ENCODE measurements at regions of chr11 and their contacts with region 1.

Region 1: GRCh38 chr11:58788355-58789023 is 56.0 kb downstream of the GLYATL2 start:
- DNase-seq: peak in 1 of 2 experiments; percentile 46
- H3K4me3 ChIP-seq: no peak overlapping the region
- H3K27ac ChIP-seq: no peak overlapping the region
- H3K4me1 ChIP-seq: no peaks in the 10 kb centered on the region
- H3K27me3 ChIP-seq: peaks cover 0 to 1% (median 0%) of the 10 kb centered on the region in 4 experiments; a peak in 1 of 7 replicates
- CTCF ChIP-seq: peak; percentile 2 to 79 (median 69)
- EP300 ChIP-seq: no peak
- POLR2A ChIP-seq: no peak
- RAD21 ChIP-seq: peak; percentile 74 to 80

Region 2: GRCh38 chr11:58770627-58771457 is 17.6 kb before region 1 on chr11:
- CTCF ChIA-PET with region 1: interaction called, 15 read pairs
- POLR2A ChIA-PET with region 1: no interaction called
- DNase-seq: no peak
- H3K4me3 ChIP-seq: no peak overlapping the region
- H3K27ac ChIP-seq: no peak overlapping the region
- H3K4me1 ChIP-seq: no peaks in the 10 kb centered on the region
- H3K27me3 ChIP-seq: no peaks in the 10 kb centered on the region
- CTCF ChIP-seq: no peak
- EP300 ChIP-seq: no peak
- POLR2A ChIP-seq: no peak
- RAD21 ChIP-seq: no peak